Right cardiac atrium (tissue), 5 donors: ENCODE measurements at regions of chr20 and their contacts with region 1.

Region 1: DNA sequence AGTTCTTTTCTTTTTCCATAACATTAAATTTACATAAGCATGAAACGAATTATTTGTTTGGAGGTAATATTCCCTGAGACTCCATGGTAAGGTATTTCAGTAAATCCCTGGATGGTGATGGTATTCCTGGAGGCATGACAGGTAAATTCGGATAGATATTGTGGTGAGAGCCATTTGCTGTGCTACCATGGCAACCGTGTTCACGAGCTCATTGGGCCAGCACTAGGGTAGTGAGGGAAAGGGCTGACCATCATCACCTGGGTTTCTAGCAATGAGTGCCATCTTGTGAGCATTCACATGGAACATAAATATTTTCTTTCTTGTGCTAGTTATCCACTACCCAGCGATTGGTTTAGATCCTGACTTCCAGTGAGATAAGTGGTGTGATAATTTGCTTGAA is 51.9 kb upstream of the GNRH2 start:
- DNase-seq: no peak
- ATAC-seq: no peak
- H3K4me3 ChIP-seq: no peak overlapping the region
- H3K27ac ChIP-seq: no peak overlapping the region
- H3K4me1 ChIP-seq: no peaks in the 10 kb centered on the region
- H3K27me3 ChIP-seq: no peaks in the 10 kb centered on the region

Region 2: GRCh38 chr20:2873010-2873746 is 118.4 kb before region 1 on chr20 and contains the start of gene PTPRA:
- intact Hi-C with region 1: loop called in 1 of 4 experiments (anchors 10 kb)
- DNase-seq: peak; percentile 93 to 97 (median 97)
- ATAC-seq: peak; percentile 97 to 98
- H3K4me3 ChIP-seq: peak within 1 kb of the TSS; percentile 90
- H3K27ac ChIP-seq: peak within 1 kb of the TSS; percentile 74
- H3K4me1 ChIP-seq: peaks cover 3% of the 10 kb centered on the region
- H3K27me3 ChIP-seq: no peaks in the 10 kb centered on the region
- total RNA-seq, gene PTPRA: 32.6 to 37.5 (median 35.7) TPM